ENCODE measurements at regions of chr13 and their contacts with region 1.

Region 1: GRCh38 chr13:81540777-81541176 is 1199.9 kb upstream of the SPRY2 start:
- DNase-seq: no peak
- H3K4me3 Mint-ChIP-seq: no peak overlapping the region
- H3K27ac Mint-ChIP-seq: no peak overlapping the region
- H3K4me1 Mint-ChIP-seq: no peaks in the 10 kb centered on the region
- H3K27me3 Mint-ChIP-seq: no peaks in the 10 kb centered on the region
- CTCF ChIP-seq: no peak

Region 2: GRCh38 chr13:81606074-81606473 is 65.3 kb after region 1 on chr13:
- CTCF ChIA-PET with region 1: no interaction called
- intact Hi-C with region 1: loop called (anchors 5 kb)
- DNase-seq: no peak
- H3K4me3 Mint-ChIP-seq: no peak overlapping the region
- H3K27ac Mint-ChIP-seq: no peak overlapping the region
- H3K4me1 Mint-ChIP-seq: no peaks in the 10 kb centered on the region
- H3K27me3 Mint-ChIP-seq: no peaks in the 10 kb centered on the region
- CTCF ChIP-seq: no peak

Region 3: GRCh38 chr13:81872581-81872980 is 331.8 kb after region 1 on chr13:
- CTCF ChIA-PET with region 1: no interaction called
- intact Hi-C with region 1: loop called (anchors 5 kb)
- DNase-seq: peak; percentile 3
- H3K4me3 Mint-ChIP-seq: no peak overlapping the region
- H3K27ac Mint-ChIP-seq: no peak overlapping the region
- H3K4me1 Mint-ChIP-seq: no peaks in the 10 kb centered on the region
- H3K27me3 Mint-ChIP-seq: no peaks in the 10 kb centered on the region
- CTCF ChIP-seq: no peak